ENCODE measurements at regions of chr17 and their contacts with region 1.

Region 1: DNA sequence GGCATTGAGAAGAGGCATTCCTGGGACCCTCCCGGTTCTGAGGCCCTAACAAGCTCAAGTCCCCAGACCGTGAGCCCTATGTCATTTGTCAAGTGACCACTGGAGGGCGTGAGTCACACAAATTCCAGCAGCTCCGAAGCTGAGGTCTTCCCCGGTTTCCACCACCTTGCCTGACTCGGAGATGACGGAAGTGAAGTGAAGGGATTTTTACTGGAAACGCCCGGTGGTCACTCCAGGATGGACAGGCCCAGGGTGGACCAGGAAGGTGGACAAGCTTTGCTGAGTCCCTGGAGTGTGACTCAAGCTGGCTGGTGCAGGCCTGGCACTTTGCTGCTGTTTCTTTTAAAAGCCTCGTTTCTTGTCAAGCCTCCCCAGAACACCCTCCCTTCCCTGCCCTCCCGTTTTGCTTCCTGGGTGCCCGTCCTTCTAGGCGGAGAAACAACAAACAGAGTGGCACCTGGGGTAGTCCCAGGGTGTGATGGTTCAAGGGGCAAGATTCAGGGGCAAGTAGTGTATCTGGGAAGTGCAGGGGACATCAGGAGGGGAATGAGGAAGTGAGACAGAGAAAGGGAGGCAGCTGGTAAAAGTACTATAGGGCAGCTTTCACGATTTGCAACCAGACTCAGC is 5.3 kb upstream of the NOS2 start:
- DNase-seq: peak; percentile 21
- H3K4me3 ChIP-seq: 0 out of 2 replicates have a peak overlapping the region, but pooled peaks have one; percentile 10
- H3K27me3 ChIP-seq: no peaks in the 10 kb centered on the region
- CTCF ChIP-seq: peak; percentile 84

Region 2: DNA sequence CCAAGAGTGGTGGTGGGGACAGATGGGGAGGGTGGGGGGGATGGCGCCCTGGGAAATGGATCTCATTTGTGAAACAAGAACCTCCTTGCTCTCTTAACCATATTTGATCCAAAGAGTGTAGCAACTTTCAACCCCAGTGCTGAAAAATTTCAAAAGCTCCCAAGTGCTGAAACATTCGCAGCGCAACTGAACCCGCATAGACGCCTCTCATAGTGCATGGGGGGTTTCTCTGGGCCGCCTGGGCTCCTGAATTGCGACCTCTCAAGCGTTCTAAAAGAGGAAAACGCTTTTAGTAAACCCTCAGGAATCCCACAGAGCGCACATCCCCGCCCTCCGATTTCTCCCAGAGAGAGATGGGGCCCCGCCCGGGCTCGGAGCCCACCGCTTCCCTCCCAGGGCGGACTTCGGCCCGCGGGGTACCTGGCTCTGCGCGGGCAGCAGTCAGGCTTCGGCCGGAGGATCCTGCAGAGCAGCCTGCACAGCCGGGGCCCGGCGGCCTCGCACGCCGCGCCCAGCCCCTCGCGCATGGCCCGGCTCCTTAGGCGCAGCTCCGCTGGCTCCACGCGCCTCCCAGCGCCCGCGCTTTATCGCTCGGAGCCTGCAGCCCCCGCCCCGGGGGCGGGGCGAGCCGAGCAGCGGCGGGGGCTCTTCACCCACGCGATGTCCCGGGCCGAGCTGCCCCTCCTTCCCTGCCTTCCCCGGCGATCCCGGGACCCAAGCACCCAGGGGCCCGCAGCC is 12.3 kb before region 1 on chr17:
- CTCF ChIA-PET with region 1: interaction called, 33 read pairs
- POLR2A ChIA-PET with region 1: no interaction called
- DNase-seq: no peak
- H3K4me3 ChIP-seq: peak overlapping the region; percentile 19
- H3K27me3 ChIP-seq: peaks cover 28% of the 10 kb centered on the region
- CTCF ChIP-seq: no peak

Region 3: GRCh38 chr17:27818401-27819105 is 12.9 kb after region 1 on chr17:
- CTCF ChIA-PET with region 1: interaction called, 13 read pairs
- POLR2A ChIA-PET with region 1: no interaction called
- DNase-seq: no peak
- H3K4me3 ChIP-seq: no peak overlapping the region
- H3K27me3 ChIP-seq: no peaks in the 10 kb centered on the region; the same call in 1 of the 2 replicates
- CTCF ChIP-seq: no peak

Region 4: GRCh38 chr17:27862004-27862403 is 56.4 kb after region 1 on chr17:
- CTCF ChIA-PET with region 1: no interaction called
- POLR2A ChIA-PET with region 1: no interaction called
- DNase-seq: no peak
- H3K4me3 ChIP-seq: no peak overlapping the region
- H3K27me3 ChIP-seq: peaks cover 5% of the 10 kb centered on the region; the same call in 1 of the 2 replicates
- CTCF ChIP-seq: no peak

Measured in BJ (cell line).